ENCODE measurements at regions of chr15 and their contacts with region 1.

Region 1: GRCh38 chr15:73697033-73697467 is 12.9 kb downstream of the CD276 start:
- DNase-seq: peak; percentile 93

Region 2: GRCh38 chr15:73325193-73325861 is 371.7 kb before region 1 on chr15:
- intact Hi-C with region 1: loop called (anchors 10 kb)
- DNase-seq: peak; percentile 67

Region 3: GRCh38 chr15:73560501-73561117 is 136.4 kb before region 1 on chr15:
- intact Hi-C with region 1: loop called (anchors 5 kb)
- DNase-seq: no peak

Region 4: GRCh38 chr15:73677146-73677607 is 19.9 kb before region 1 on chr15:
- intact Hi-C with region 1: loop called (anchors 2 kb)
- DNase-seq: no peak

Region 5: GRCh38 chr15:73683777-73684580 is 13.1 kb before region 1 on chr15 and contains the start of gene CD276:
- intact Hi-C with region 1: loop called (anchors 2 kb)
- DNase-seq: peak; percentile 89
- total RNA-seq, gene CD276: 40.6 TPM

Measured in cardiac septum (tissue), 1 donor.